ENCODE measurements at regions of chr7 and their contacts with region 1.

Region 1: GRCh38 chr7:17298207-17298839 is at the start of gene AHR:
- DNase-seq: peak; percentile 93 to 97 (median 94)
- ATAC-seq: peak; percentile 93 to 97 (median 97)
- H3K4me3 ChIP-seq: peak within 1 kb of the TSS; percentile 84 to 98 (median 92)
- H3K27ac ChIP-seq: peak within 1 kb of the TSS; percentile 88 to 98 (median 96)
- H3K4me1 ChIP-seq: peaks cover 3 to 44% (median 23%) of the 10 kb centered on the region in 12 donors
- H3K27me3 ChIP-seq: no peaks in the 10 kb centered on the region
- CTCF ChIP-seq: no peak
- POLR2A ChIP-seq: peak in 1 of 2 donors; percentile 98
- total RNA-seq, gene AHR: 19.5 to 84.6 (median 46.1) TPM

Region 2: DNA sequence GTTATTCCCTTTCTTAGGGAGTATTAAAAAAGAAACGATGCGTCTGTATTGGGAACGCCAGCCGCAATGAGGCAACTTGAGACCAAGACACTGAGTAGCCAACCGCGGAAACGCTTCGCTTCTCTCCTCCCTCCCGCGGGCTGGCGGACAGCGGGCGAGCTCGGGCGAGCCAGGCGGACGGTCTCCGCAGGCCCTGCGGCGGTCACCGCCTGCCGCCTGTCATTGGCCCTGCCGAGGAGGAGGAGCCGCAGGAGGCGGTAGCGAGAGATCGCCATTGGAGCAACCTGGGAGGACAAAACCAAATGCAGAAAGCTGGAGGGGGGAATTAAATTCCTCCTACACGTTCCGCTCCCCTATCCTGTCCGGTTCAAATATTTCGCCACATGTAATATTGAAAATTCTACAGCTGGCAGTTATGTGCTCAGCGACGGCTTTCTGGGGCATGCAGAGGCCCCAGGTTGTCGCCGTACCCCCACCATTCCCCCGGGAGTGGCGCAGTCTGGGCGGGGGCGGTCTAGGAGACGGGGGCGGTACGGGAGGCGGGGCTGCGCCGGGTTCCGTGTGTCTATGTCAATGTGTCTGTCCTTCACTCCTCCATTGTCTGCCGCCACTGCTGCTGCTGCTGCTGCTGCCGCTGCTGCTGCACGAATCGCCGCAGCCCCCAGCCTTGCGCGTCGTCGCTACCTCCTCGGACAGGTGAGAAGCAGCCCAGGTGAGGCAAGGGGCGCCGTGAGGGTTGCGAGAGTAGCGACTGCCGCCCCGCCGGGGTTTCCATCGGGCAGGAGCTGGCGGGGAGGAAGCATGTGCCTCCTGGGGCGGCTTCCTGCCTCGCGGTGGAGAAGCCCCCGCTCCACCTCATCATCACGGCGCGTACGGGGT is 652.5 kb before region 1 on chr7 and contains the starts of genes ANKMY2 and BZW2:
- intact Hi-C with region 1: loop called in 1 of 10 experiments (anchors 10 kb)
- DNase-seq: peak; percentile 96 to 98 (median 97)
- ATAC-seq: peak; percentile 95 to 96 (median 96)
- H3K4me3 ChIP-seq: peak within 1 kb of the TSS; percentile 71 to 97 (median 86)
- H3K27ac ChIP-seq: peak within 1 kb of the TSS; percentile 75 to 97 (median 94)
- H3K4me1 ChIP-seq: peaks cover 0 to 75% (median 53%) of the 10 kb centered on the region in 12 donors
- H3K27me3 ChIP-seq: no peaks in the 10 kb centered on the region
- CTCF ChIP-seq: peak in 6 of 12 donors; percentile 5 to 50 (median 24)
- POLR2A ChIP-seq: peak in 1 of 2 donors; percentile 98
- total RNA-seq, gene ANKMY2: 17.7 to 44.3 (median 28.3) TPM
- total RNA-seq, gene BZW2: 195 to 808 (median 308) TPM

Region 3: DNA sequence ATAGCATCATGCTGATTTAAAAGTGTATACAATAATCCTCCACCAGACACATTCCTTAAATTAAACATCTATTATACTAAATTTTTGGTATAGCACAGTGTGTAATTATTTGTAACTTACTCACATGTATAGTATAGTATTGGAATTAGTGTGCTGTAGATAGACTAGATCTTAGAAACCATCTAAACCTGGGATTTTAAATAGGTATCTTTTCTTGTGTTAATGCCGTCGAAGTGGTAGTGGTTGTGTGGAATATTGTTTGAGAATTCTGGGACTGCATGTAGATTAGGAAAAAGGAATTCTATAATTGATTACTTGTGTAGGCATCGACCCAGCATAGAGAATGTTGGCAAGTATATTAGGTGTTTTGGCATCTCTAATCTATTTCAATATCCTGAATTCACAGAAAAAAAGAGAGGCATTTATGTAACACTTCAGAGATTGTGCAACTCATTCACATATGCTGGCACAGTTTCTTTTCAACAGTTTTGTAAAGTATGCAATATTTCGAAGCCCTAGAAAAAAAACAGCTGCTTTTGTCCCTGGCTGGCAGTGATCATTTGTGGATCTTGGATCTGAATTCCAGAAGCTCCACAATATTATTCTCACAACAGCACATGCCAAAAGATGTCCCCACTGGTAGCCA is 271.1 kb before region 1 on chr7:
- intact Hi-C with region 1: loop called in 1 of 10 experiments (anchors 5 kb)
- DNase-seq: no peak
- ATAC-seq: peak in 1 of 4 donors; percentile 18
- H3K4me3 ChIP-seq: no peak overlapping the region
- H3K27ac ChIP-seq: peak overlapping the region in 1 of 12 donors; percentile 66
- H3K4me1 ChIP-seq: peaks cover 0 to 44% (median 0%) of the 10 kb centered on the region in 12 donors
- H3K27me3 ChIP-seq: no peaks in the 10 kb centered on the region
- CTCF ChIP-seq: no peak
- POLR2A ChIP-seq: no peak

Region 4: DNA sequence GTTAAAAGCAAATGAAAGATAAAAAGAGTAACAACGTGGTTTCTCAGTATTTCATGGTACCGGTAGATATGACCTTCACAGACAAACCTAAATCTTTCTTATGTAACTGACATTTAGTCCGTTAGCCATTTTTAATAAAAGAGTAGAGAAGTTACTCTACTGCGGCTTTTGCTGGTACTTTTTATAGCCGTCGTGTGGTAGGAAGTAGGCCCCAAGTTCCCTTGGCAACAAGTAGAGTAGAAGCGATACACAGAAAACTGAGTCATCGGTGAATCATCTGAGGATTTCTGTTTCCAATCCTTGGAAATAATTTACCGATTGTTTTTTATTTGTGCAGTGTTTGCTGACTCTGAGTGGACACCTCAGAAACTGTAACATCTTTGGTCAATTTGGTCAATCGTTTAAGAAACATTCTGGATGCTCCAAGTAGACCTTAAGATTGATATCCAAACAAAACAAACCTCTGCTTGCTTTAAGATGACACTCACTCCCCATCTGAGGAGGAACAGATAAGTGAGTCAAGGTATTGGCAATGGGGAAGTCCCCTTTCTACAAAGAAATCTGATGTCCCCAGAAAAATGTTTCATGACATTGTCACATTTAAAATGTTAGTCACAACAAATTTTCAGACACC is 63.8 kb before region 1 on chr7:
- intact Hi-C with region 1: loop called in 2 of 10 experiments (anchors 5 kb)
- DNase-seq: peak in 2 of 5 donors; percentile 23 to 25
- ATAC-seq: peak; percentile 16 to 67 (median 58)
- H3K4me3 ChIP-seq: peak overlapping the region in 2 of 12 donors; percentile 11 to 30
- H3K27ac ChIP-seq: peak overlapping the region in 6 of 12 donors; percentile 16 to 86 (median 38)
- H3K4me1 ChIP-seq: peaks cover 0 to 42% (median 21%) of the 10 kb centered on the region in 12 donors
- H3K27me3 ChIP-seq: no peaks in the 10 kb centered on the region
- CTCF ChIP-seq: peak in 1 of 12 donors; percentile 5
- POLR2A ChIP-seq: no peak

Region 5: DNA sequence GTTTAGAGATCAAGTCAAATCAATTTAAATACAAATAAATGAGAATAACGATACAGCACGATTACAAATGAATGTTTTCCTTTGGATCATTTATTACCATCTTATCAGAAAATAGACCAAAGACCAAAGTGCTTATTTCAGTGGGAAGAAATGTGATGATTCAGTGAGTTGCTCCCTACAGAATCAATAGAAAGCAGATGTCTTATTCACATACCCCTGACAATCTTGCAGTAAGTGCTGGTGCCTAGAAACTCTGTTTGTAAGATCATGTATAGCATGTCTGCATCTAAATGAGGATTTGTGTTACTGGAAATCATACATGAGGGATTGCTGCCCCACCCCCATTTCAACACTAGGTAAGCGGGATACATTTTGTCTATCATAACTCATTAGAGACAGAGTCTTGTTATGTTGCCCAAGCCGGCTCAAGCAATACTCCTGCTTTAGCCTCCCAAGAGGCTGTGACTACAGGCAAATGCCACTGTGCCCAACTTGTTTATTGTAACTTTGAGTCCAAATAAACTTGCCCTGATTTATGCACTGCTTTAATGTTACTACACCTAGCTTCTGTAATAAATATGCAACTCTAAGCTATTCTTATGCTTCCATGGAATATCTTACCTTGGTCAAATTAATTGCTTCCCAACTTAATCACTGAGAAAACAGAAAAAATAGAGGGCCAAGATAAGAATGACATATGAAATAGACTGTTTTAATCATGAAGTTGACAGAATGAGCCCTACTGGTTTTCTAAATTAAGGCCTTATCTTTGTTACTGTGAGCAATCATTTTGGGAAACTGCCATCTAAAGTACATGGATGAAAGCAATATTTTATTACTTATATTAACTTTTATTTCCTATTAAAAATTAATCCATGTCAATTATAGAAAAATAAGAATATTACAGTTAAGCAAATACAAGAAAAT is 82.7 kb after region 1 on chr7:
- intact Hi-C with region 1: no loop called
- DNase-seq: no peak
- ATAC-seq: no peak
- H3K4me3 ChIP-seq: no peak overlapping the region
- H3K27ac ChIP-seq: no peak overlapping the region
- H3K4me1 ChIP-seq: peaks cover 0 to 4% (median 0%) of the 10 kb centered on the region in 12 donors
- H3K27me3 ChIP-seq: no peaks in the 10 kb centered on the region
- CTCF ChIP-seq: no peak
- POLR2A ChIP-seq: no peak

Region 6: GRCh38 chr7:17564678-17565212 is 266.4 kb after region 1 on chr7:
- intact Hi-C with region 1: no loop called
- DNase-seq: no peak
- ATAC-seq: no peak
- H3K4me3 ChIP-seq: no peak overlapping the region
- H3K27ac ChIP-seq: no peak overlapping the region
- H3K4me1 ChIP-seq: no peaks in the 10 kb centered on the region
- H3K27me3 ChIP-seq: peaks cover 0 to 3% (median 0%) of the 10 kb centered on the region in 9 donors
- CTCF ChIP-seq: no peak
- POLR2A ChIP-seq: no peak

Region 7: DNA sequence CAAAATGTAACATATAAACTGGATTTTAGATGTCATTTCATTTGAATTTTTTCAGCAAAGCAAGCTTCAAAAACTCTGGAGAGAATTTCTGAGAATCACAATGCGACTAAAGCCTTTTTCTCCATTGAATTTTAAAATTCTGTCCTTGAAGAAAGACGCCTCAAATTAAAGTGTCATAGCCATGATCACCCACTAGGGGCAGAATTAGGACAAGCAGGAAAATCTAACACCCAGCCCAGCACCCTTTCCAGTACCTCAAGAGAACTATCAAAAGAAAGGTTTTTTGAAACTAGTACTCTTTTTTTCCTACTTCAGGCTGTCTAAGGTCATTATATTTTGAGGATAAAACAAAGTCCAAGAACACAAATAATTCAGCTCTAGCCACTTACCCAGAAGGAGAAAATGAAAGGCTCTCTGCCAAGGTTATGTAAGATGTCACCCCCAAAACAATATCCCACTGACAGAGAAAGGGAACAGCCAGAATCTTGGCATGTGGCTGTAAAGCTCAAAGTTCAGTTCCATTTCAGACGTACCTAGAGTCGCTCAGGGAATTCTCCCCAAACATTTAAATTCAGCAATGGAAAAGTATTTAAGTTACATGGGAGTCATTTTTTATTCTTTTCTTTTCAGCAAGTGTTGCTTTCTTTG is 342.5 kb after region 1 on chr7:
- intact Hi-C with region 1: loop called in 6 of 10 experiments (anchors 5 to 10 kb)
- DNase-seq: no peak
- ATAC-seq: no peak
- H3K4me3 ChIP-seq: no peak overlapping the region
- H3K27ac ChIP-seq: no peak overlapping the region
- H3K4me1 ChIP-seq: no peaks in the 10 kb centered on the region
- H3K27me3 ChIP-seq: no peaks in the 10 kb centered on the region
- CTCF ChIP-seq: peak; percentile 46 to 78 (median 69)
- POLR2A ChIP-seq: no peak

Region 8: DNA sequence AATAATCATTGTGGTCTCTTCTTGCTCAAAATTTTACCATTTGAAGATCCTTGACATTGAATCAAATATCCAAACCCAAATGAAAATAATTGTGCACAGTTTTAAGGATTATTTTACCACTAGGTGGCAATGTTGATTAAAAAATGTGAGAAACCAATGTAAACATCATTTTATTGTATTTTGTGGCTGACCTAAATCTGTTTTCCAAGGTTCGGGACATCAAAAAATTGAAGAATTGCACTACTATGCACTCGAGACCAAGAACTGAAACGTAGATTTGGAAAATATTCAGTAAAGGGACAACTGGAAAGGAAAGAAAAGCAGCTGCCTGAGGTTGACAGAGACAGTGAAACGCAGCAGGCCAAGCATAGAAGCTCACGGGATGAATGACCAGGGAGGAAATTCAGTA is 382.6 kb after region 1 on chr7:
- intact Hi-C with region 1: loop called in 1 of 10 experiments (anchors 10 kb)
- DNase-seq: no peak
- ATAC-seq: peak in 1 of 4 donors; percentile 20
- H3K4me3 ChIP-seq: no peak overlapping the region
- H3K27ac ChIP-seq: peak overlapping the region in 1 of 12 donors; percentile 75
- H3K4me1 ChIP-seq: peaks cover 0 to 45% (median 16%) of the 10 kb centered on the region in 12 donors
- H3K27me3 ChIP-seq: no peaks in the 10 kb centered on the region
- CTCF ChIP-seq: peak; percentile 33 to 72 (median 62)
- POLR2A ChIP-seq: no peak